Gastrocnemius medialis (tissue), 4 donors: ENCODE measurements at regions of chr1 and their contacts with region 1.

Region 1: GRCh38 chr1:155562581-155563376 is at the start of gene ASH1L:
- DNase-seq: peak; percentile 91
- ATAC-seq: peak; percentile 88 to 91
- H3K4me3 ChIP-seq: peak within 1 kb of the TSS; percentile 85 to 99 (median 96)
- H3K27ac ChIP-seq: peak within 1 kb of the TSS; percentile 96 to 100 (median 98)
- H3K4me1 ChIP-seq: peaks cover 39 to 41% of the 10 kb centered on the region in 2 donors
- H3K27me3 ChIP-seq: no peaks in the 10 kb centered on the region
- CTCF ChIP-seq: peak in 1 of 5 experiments; percentile 10
- POLR2A ChIP-seq: peak; percentile 87 to 94
- total RNA-seq, gene ASH1L: 43.7 to 57.1 (median 52.0) TPM

Region 2: GRCh38 chr1:153849487-153850185 is 1713.1 kb before region 1 on chr1:
- in situ Hi-C with region 1: no loop called
- intact Hi-C with region 1: no loop called
- DNase-seq: no peak
- ATAC-seq: no peak
- H3K4me3 ChIP-seq: no peak overlapping the region
- H3K27ac ChIP-seq: no peak overlapping the region
- H3K4me1 ChIP-seq: no peaks in the 10 kb centered on the region
- H3K27me3 ChIP-seq: no peaks in the 10 kb centered on the region
- CTCF ChIP-seq: no peak
- POLR2A ChIP-seq: no peak

Region 3: GRCh38 chr1:154767315-154768240 is 795.2 kb before region 1 on chr1:
- in situ Hi-C with region 1: no loop called
- intact Hi-C with region 1: no loop called
- DNase-seq: no peak
- ATAC-seq: no peak
- H3K4me3 ChIP-seq: no peak overlapping the region
- H3K27ac ChIP-seq: no peak overlapping the region
- H3K4me1 ChIP-seq: no peaks in the 10 kb centered on the region
- H3K27me3 ChIP-seq: no peaks in the 10 kb centered on the region
- CTCF ChIP-seq: no peak
- POLR2A ChIP-seq: no peak

Region 4: DNA sequence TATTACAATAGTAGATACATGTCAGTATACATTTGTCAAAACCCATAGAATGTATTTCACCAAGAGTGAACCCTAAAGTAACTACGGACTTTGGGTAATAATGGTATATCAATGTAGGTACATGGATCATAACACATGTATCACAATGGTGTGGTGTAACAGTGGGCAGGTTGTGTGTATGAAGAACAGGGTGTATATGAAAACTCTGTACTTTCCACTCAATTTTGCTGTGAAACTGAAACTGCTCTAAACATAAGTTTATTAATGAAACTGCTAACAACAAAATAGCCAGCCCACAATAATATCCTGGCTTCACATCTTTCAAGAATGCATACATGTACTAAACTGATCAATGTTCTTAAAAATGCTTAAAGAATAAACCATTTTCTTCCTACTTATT is 151.8 kb before region 1 on chr1:
- in situ Hi-C with region 1: no loop called
- intact Hi-C with region 1: no loop called
- DNase-seq: no peak
- ATAC-seq: no peak
- H3K4me3 ChIP-seq: no peak overlapping the region
- H3K27ac ChIP-seq: no peak overlapping the region
- H3K4me1 ChIP-seq: no peaks in the 10 kb centered on the region
- H3K27me3 ChIP-seq: no peaks in the 10 kb centered on the region
- CTCF ChIP-seq: no peak
- POLR2A ChIP-seq: no peak

Region 5: DNA sequence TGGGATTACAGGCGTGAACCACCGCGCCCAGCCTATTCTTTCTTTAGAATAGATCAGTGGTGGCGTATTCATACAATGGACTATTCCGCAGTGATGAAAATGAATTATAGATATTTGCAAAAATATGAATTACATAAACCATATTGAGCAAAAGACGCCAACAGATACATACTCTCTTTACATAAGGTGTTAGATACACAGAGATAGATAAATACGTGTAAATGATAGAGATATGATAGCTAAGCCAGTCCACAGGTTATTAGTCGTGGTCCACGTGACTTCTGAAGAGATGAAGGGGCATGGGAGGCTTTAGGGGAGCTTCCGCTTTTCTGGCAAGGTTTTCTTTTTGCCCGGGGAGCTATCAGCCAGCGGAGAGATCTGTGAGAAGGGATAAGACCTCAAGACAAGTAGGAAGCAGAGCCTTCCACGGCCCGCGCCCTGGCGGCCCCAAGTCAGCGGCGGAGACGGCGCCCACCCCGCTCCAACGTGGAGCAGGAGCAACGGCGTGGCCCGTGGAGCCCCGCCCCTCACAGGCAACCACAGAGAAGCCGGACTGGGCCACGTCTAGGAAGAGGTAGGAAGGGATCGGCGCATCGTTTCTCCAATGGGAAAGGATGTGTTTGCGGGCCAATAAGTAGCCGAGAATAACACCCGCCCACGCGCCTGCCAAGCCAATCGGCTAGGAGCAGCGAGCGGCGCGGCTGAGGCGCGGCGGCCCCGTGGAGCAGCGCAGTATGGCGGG is 46.9 kb after region 1 on chr1 and contains the start of gene MSTO1:
- in situ Hi-C with region 1: no loop called
- intact Hi-C with region 1: loop called (anchors 2 kb)
- DNase-seq: peak; percentile 97 to 98
- ATAC-seq: peak; percentile 100
- H3K4me3 ChIP-seq: peak within 1 kb of the TSS; percentile 56 to 83 (median 74)
- H3K27ac ChIP-seq: peak within 1 kb of the TSS; percentile 69 to 85 (median 80)
- H3K4me1 ChIP-seq: peaks cover 3 to 5% of the 10 kb centered on the region in 2 donors
- H3K27me3 ChIP-seq: no peaks in the 10 kb centered on the region
- CTCF ChIP-seq: no peak
- POLR2A ChIP-seq: peak; percentile 39 to 53
- total RNA-seq, gene MSTO1: 1.7 to 3.1 (median 2.3) TPM

Region 6: GRCh38 chr1:155688324-155689080 is 125.7 kb after region 1 on chr1 and contains the start of gene YY1AP1:
- in situ Hi-C with region 1: no loop called
- intact Hi-C with region 1: loop called (anchors 2 kb)
- DNase-seq: peak; percentile 89 to 91
- ATAC-seq: peak; percentile 90 to 91
- H3K4me3 ChIP-seq: peak within 1 kb of the TSS; percentile 78 to 99 (median 96)
- H3K27ac ChIP-seq: peak within 1 kb of the TSS; percentile 94 to 99 (median 96)
- H3K4me1 ChIP-seq: peaks cover 45 to 46% of the 10 kb centered on the region in 2 donors
- H3K27me3 ChIP-seq: no peaks in the 10 kb centered on the region
- CTCF ChIP-seq: peak in 3 of 5 experiments; percentile 14 to 29 (median 29)
- POLR2A ChIP-seq: peak; percentile 93 to 94
- total RNA-seq, gene YY1AP1: 81.6 to 162 (median 120) TPM